WTC11 (cell line): ENCODE measurements at regions of chr6 and their contacts with region 1.

Region 1: DNA sequence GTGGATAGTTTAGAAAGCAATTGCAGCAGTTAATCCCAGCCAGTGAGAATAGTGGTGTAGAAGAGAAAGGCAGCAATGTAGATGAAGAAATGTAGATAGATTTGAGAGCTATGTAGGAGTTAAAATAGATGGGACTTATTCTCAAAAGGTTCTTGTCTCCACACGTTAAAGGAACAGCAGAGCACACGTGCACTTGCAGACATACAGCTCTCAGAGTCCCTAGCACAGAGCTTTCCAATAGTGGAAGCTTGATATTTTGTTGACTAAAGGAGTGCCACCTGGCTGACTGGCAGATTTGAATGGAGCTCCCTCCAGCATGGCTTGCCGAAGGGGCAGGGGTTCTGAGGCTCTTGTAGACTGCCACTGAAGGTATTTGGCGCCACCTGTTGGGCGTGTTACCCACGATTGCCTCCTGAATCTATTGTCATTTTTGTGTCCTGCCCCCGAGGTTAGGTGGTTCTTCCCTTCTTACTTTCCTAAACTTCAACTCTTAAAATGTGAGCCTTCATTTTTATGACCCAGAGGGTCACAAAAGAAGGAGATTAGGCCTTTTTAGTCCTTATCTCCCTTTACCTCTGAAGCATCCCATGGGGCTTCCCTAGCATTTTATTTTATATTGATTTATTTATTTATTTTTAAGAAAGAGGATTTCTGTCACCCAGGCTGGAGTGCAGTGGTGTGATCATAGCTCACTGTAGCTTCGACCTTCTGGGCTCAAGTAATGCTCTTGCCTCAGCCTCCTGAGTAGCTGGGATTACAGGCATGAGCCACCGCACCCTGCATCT is 16.4 kb downstream of the BRD2 start:
- DNase-seq: peak; percentile 94
- ATAC-seq: peak; percentile 79
- H3K4me3 Mint-ChIP-seq: no peak overlapping the region
- H3K27ac Mint-ChIP-seq: peak overlapping the region; percentile 82
- H3K4me1 Mint-ChIP-seq: peaks cover 18% of the 10 kb centered on the region
- H3K27me3 Mint-ChIP-seq: no peaks in the 10 kb centered on the region
- CTCF ChIP-seq: peak; percentile 68

Region 2: GRCh38 chr6:32825966-32826365 is 158.8 kb before region 1 on chr6:
- CTCF ChIA-PET with region 1: interaction called, 10 read pairs
- POLR2A ChIA-PET with region 1: no interaction called
- DNase-seq: no peak
- ATAC-seq: peak; percentile 86
- H3K4me3 Mint-ChIP-seq: no peak overlapping the region
- H3K27ac Mint-ChIP-seq: peak overlapping the region; percentile 68; the same call in 1 of the 2 replicates
- H3K4me1 Mint-ChIP-seq: peaks cover 9% of the 10 kb centered on the region
- H3K27me3 Mint-ChIP-seq: no peaks in the 10 kb centered on the region
- CTCF ChIP-seq: no peak

Region 3: DNA sequence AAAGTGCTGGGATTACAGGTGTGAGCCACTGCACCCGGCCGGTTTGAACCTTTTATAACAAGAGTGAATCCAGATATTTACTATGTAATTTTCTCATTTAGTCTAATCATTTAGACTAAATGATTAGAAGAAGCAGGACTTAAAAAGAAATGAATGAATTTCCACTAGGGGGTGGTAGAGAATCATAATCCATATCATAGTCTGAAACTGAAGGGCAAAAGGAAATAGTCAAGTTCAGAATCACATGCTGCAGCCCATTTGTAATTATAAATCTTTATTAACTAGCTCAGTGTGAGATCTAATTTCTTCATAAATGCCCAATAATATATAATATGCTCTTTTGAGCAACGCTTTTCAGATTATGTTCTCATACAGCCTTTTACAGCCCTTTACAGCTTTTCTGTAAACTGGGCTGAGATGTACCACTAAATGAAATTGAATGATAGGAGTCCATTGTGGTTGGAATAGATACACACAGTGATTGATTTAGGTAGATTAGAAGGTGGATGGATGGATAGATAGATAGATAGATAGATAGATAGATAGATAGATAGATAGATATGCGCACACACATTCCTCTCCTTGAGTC is 99.0 kb before region 1 on chr6:
- CTCF ChIA-PET with region 1: interaction called, 21 read pairs
- POLR2A ChIA-PET with region 1: no interaction called
- DNase-seq: no peak
- ATAC-seq: no peak
- H3K4me3 Mint-ChIP-seq: no peak overlapping the region
- H3K27ac Mint-ChIP-seq: no peak overlapping the region
- H3K4me1 Mint-ChIP-seq: no peaks in the 10 kb centered on the region
- H3K27me3 Mint-ChIP-seq: peaks cover 9% of the 10 kb centered on the region
- CTCF ChIP-seq: peak; percentile 14; the same call in 1 of the 2 replicates

Region 4: DNA sequence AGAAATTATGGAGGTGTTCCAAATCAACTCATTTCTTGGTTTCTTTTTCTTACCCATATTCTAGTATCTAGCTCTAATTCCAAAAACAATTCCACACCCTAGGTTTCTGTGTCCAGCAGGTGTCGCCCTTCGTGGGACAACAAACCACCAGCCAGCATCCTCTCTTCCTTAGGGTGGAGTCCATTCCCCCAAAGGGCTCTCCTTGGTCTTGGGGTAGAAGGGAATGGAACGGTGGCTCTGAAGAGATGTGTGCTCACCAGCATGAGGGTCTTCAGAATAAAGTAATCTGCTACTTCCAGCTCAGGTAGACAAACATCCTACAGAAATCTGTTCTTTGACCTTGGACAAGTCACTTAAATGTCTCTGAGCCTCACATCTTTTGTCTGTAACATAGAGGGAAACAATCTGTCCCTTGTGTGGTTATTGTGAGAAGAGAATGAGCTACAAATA is 51.1 kb before region 1 on chr6:
- CTCF ChIA-PET with region 1: interaction called, 95 read pairs
- POLR2A ChIA-PET with region 1: interaction called, 3 read pairs
- DNase-seq: peak; percentile 82
- ATAC-seq: peak; percentile 84
- H3K4me3 Mint-ChIP-seq: no peak overlapping the region
- H3K27ac Mint-ChIP-seq: no peak overlapping the region
- H3K4me1 Mint-ChIP-seq: no peaks in the 10 kb centered on the region
- H3K27me3 Mint-ChIP-seq: peaks cover 36% of the 10 kb centered on the region
- CTCF ChIP-seq: peak; percentile 49

Region 5: DNA sequence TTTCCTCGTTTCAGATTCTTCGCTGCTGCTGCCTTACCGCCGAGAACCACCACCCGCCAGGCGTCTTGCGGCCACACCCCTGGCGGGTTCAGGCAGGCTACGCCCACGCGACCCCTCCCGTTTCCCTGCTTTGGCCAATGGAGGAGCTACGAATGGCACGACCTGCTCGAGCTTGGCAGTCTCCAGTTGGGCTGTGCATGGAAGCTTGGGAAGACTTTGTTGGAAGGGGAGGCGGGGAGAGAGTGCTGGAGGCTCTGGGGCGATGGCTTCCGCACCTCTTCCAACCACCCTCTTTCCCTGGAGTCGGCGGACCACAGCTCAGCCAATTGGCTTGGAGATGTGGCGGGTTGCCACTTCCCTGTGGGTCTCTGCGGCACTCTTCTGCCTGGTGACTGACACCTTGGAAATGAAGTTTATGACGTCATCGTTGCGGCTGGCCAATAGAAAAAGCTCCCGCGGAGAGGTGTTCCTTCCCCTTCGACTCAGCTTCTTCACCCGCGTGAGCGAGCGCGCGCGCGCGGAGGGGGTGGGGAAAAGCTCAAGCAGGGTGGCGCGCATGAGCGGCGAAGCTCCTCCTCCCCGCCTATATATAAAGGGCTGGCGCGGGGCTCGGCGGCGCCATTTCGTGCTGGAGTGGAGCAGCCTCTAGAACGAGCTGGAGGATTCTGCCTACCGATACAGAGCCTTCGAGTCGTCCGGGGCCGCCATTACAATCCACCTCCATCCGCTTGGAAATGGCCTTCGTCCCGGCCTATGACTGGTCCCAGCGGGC is 13.0 kb before region 1 on chr6:
- CTCF ChIA-PET with region 1: interaction called, 121 read pairs
- POLR2A ChIA-PET with region 1: interaction called, 146 read pairs
- DNase-seq: peak; percentile 99
- ATAC-seq: peak; percentile 56
- H3K4me3 Mint-ChIP-seq: peak overlapping the region; percentile 98
- H3K27ac Mint-ChIP-seq: peak overlapping the region; percentile 100
- H3K4me1 Mint-ChIP-seq: peaks cover 32% of the 10 kb centered on the region
- H3K27me3 Mint-ChIP-seq: peaks cover 4% of the 10 kb centered on the region; the same call in 1 of the 2 replicates
- CTCF ChIP-seq: no peak

Region 6: GRCh38 chr6:33057222-33058150 is 72.7 kb after region 1 on chr6:
- CTCF ChIA-PET with region 1: no interaction called
- POLR2A ChIA-PET with region 1: no interaction called
- DNase-seq: no peak
- ATAC-seq: no peak
- H3K4me3 Mint-ChIP-seq: no peak overlapping the region
- H3K27ac Mint-ChIP-seq: no peak overlapping the region
- H3K4me1 Mint-ChIP-seq: peaks cover 9% of the 10 kb centered on the region
- H3K27me3 Mint-ChIP-seq: no peaks in the 10 kb centered on the region; the same call in 1 of the 2 replicates
- CTCF ChIP-seq: no peak

Region 7: DNA sequence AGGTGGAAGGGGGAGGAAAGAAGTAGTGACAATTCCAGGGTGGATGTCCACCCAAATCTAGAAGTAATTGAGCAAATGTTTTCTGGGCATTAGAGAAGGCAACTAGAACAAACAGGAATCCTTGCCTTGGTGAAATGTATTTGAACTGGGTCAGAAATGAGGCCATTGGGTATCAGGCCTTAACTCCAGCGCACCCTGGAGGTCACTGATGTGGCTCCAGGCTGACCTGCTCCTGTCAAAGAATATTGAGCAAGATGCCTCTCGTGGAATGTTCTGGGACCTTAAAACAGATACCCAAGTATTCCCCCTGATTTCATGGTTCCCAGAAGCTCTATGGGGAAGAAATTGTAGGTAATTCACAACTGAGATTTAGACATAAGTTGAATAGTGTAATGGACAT is 97.9 kb after region 1 on chr6:
- CTCF ChIA-PET with region 1: interaction called, 13 read pairs
- POLR2A ChIA-PET with region 1: interaction called, 3 read pairs
- DNase-seq: peak; percentile 51
- ATAC-seq: peak; percentile 38
- H3K4me3 Mint-ChIP-seq: peak overlapping the region; percentile 9; the same call in 1 of the 2 replicates
- H3K27ac Mint-ChIP-seq: peak overlapping the region; percentile 51; the same call in 1 of the 2 replicates
- H3K4me1 Mint-ChIP-seq: peaks cover 31% of the 10 kb centered on the region
- H3K27me3 Mint-ChIP-seq: peaks cover 18% of the 10 kb centered on the region
- CTCF ChIP-seq: peak; percentile 26; the same call in 1 of the 2 replicates

Region 8: DNA sequence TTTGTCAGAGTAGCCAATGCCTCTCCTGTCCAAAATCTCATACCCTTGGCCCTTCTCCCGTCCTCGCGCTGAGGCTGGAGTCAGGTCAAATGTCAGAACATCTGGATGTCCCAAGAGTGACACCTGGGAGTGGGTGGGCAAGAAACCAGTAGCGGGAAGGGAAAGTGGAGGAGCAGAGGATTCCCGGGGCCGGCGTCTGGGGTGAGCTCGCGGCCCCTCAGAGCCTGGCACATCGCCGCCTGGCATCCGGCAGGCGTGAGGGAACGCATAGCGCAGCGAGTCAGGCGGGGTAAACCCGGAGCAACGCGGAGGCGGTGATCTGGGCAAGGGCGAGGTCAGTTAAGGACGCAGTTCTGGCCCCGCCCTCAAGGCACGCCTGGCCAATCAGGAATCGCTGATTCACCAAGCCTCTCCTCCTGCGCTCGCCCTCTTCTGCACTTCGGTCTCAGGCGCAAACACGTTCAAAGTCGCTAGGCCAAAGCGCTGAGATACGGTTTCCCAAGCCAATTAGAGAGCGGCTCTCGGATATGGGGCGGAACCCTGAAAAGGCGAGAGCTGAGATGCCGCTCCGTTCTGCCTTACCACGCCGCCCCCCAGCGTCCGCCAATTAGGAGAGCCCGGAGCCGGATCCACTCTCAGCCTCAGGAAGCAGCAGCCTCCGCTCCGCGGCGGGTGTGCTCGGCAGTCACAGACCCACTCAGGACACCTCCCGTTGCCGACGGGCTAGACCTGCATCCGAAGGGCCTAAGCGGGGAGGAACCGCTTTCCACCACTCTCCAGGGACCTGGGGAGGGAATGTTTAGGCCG is 264.3 kb after region 1 on chr6:
- CTCF ChIA-PET with region 1: interaction called, 26 read pairs
- POLR2A ChIA-PET with region 1: no interaction called
- DNase-seq: peak; percentile 97
- ATAC-seq: peak; percentile 95
- H3K4me3 Mint-ChIP-seq: peak overlapping the region; percentile 86
- H3K27ac Mint-ChIP-seq: peak overlapping the region; percentile 87
- H3K4me1 Mint-ChIP-seq: peaks cover 18% of the 10 kb centered on the region
- H3K27me3 Mint-ChIP-seq: peaks cover 26% of the 10 kb centered on the region
- CTCF ChIP-seq: no peak